H1 (cell line): ENCODE measurements at regions of chr10 and their contacts with region 1.

Region 1: DNA sequence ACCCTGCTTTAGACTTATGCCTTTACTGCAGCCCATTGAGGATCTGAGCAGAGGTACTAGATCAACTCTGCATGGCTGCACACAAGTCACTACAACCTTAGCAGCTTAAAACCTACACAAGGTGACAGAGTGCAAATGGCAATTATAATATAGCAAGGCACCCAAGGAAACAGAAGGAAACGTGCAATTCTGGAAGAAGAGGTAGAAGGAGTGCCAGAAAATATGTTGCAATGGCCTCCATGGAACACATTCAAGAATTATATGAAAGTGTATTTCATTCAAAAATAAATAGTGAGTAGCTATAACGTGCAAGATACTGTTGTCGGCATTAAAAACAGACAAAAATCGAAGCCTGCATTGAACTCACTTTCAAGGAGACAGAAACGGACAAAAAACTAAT is 2.9 kb upstream of the AKR1C8 start:
- DNase-seq: no peak
- H3K4me3 ChIP-seq: no peak overlapping the region
- H3K27ac ChIP-seq: no peak overlapping the region
- H3K4me1 ChIP-seq: no peaks in the 10 kb centered on the region
- H3K27me3 ChIP-seq: no peaks in the 10 kb centered on the region
- CTCF ChIP-seq: no peak
- EP300 ChIP-seq: no peak
- POLR2A ChIP-seq: no peak
- RAD21 ChIP-seq: no peak

Region 2: GRCh38 chr10:5199398-5199797 is 11.5 kb after region 1 on chr10:
- CTCF ChIA-PET with region 1: interaction called, 11 read pairs
- POLR2A ChIA-PET with region 1: no interaction called
- DNase-seq: no peak
- H3K4me3 ChIP-seq: no peak overlapping the region
- H3K27ac ChIP-seq: no peak overlapping the region
- H3K4me1 ChIP-seq: peaks cover 0 to 3% (median 0%) of the 10 kb centered on the region in 4 experiments; a peak in 1 of 7 replicates
- H3K27me3 ChIP-seq: no peaks in the 10 kb centered on the region
- CTCF ChIP-seq: peak; percentile 35 to 55 (median 48)
- EP300 ChIP-seq: no peak
- POLR2A ChIP-seq: no peak
- RAD21 ChIP-seq: peak; percentile 35 to 43

Region 3: GRCh38 chr10:5265139-5265538 is 77.3 kb after region 1 on chr10:
- CTCF ChIA-PET with region 1: no interaction called
- POLR2A ChIA-PET with region 1: no interaction called
- DNase-seq: no peak
- H3K4me3 ChIP-seq: no peak overlapping the region
- H3K27ac ChIP-seq: no peak overlapping the region
- H3K4me1 ChIP-seq: peaks cover 0 to 5% (median 3%) of the 10 kb centered on the region in 4 experiments; a peak in 3 of 7 replicates
- H3K27me3 ChIP-seq: peaks cover 0 to 1% (median 0%) of the 10 kb centered on the region in 4 experiments; a peak in 1 of 7 replicates
- CTCF ChIP-seq: no peak
- EP300 ChIP-seq: no peak
- POLR2A ChIP-seq: no peak
- RAD21 ChIP-seq: no peak